ENCODE measurements at regions of chr7 and their contacts with region 1.

Region 1: GRCh38 chr7:32490127-32490822 is at the start of gene LSM5:
- DNase-seq: peak; percentile 92
- H3K4me3 ChIP-seq: peak within 1 kb of the TSS; percentile 58 to 99 (median 73)
- H3K27ac ChIP-seq: peak within 1 kb of the TSS; percentile 59
- H3K4me1 ChIP-seq: peaks cover 6% of the 10 kb centered on the region
- H3K27me3 ChIP-seq: no peaks in the 10 kb centered on the region
- CTCF ChIP-seq: no peak
- total RNA-seq, gene LSM5: 15.7 to 55.6 TPM

Region 2: GRCh38 chr7:32536585-32536984 is 46.3 kb after region 1 on chr7:
- CTCF ChIA-PET with region 1: no interaction called
- dilution Hi-C with region 1: no loop called
- in situ Hi-C with region 1: no loop called
- intact Hi-C with region 1: loop called (anchors 2 kb)
- DNase-seq: peak; percentile 86
- H3K4me3 ChIP-seq: no peak overlapping the region
- H3K27ac ChIP-seq: peak overlapping the region; percentile 12
- H3K4me1 ChIP-seq: peaks cover 11% of the 10 kb centered on the region
- H3K27me3 ChIP-seq: no peaks in the 10 kb centered on the region
- CTCF ChIP-seq: no peak

Region 3: DNA sequence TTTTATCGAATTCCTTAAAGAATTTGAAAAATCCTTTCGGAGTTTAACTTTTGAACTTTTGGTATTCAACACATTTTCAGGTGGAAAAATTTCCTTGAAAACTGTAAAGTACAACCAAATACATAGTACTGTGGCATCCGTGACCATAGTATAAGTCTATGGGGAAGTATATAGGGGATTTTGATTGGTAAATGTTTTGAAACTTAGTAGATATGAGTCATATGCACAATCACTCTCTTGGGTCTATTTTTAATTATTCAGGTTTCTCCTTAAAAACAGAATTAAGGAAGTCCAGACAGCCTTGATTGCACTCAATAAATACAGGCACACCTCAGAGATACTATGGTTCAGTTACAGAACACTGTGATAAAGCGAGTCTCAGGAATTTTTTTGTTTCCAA is 69.2 kb after region 1 on chr7:
- CTCF ChIA-PET with region 1: no interaction called
- dilution Hi-C with region 1: no loop called
- in situ Hi-C with region 1: no loop called
- intact Hi-C with region 1: loop called (anchors 5 kb)
- DNase-seq: no peak
- H3K4me3 ChIP-seq: no peak overlapping the region
- H3K27ac ChIP-seq: no peak overlapping the region
- H3K4me1 ChIP-seq: no peaks in the 10 kb centered on the region
- H3K27me3 ChIP-seq: no peaks in the 10 kb centered on the region
- CTCF ChIP-seq: no peak

Region 4: DNA sequence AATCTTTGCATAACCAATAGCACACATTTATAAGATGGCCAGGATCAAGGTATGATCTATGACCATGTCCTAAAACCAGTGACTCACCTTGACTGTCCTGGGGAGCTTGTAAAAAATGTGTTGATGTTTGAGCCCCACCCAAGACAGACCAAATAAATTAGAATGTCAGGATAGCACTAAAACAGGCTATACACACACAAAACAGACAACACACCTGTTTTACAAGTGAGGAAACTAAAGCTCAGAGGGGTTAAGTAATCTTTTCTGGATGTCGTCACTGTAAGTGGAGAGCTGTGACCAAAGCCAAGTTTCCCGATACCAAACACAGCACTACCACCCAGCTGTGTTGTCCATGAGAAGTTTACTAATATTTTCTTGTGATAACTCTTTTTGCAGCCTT is 89.5 kb after region 1 on chr7:
- CTCF ChIA-PET with region 1: no interaction called
- dilution Hi-C with region 1: no loop called
- in situ Hi-C with region 1: no loop called
- intact Hi-C with region 1: loop called (anchors 5 kb)
- DNase-seq: peak; percentile 9
- H3K4me3 ChIP-seq: no peak overlapping the region
- H3K27ac ChIP-seq: no peak overlapping the region
- H3K4me1 ChIP-seq: no peaks in the 10 kb centered on the region
- H3K27me3 ChIP-seq: no peaks in the 10 kb centered on the region
- CTCF ChIP-seq: no peak

Region 5: GRCh38 chr7:32694182-32694581 is 203.9 kb after region 1 on chr7:
- CTCF ChIA-PET with region 1: no interaction called
- dilution Hi-C with region 1: no loop called
- in situ Hi-C with region 1: no loop called
- intact Hi-C with region 1: loop called (anchors 5 kb)
- DNase-seq: no peak
- H3K4me3 ChIP-seq: no peak overlapping the region
- H3K27ac ChIP-seq: no peak overlapping the region
- H3K4me1 ChIP-seq: no peaks in the 10 kb centered on the region
- H3K27me3 ChIP-seq: no peaks in the 10 kb centered on the region
- CTCF ChIP-seq: no peak

Measured in mammary epithelial cell (primary cell).